BJ (cell line): ENCODE measurements at regions of chr20 and their contacts with region 1.

Region 1: GRCh38 chr20:22339091-22339881 is 245.1 kb downstream of the FOXA2 start:
- DNase-seq: no peak
- H3K4me3 ChIP-seq: no peak overlapping the region
- H3K27me3 ChIP-seq: no peaks in the 10 kb centered on the region
- CTCF ChIP-seq: peak; percentile 71

Region 2: GRCh38 chr20:22567944-22568871 is 228.9 kb after region 1 on chr20:
- CTCF ChIA-PET with region 1: no interaction called
- POLR2A ChIA-PET with region 1: no interaction called
- DNase-seq: no peak
- H3K4me3 ChIP-seq: no peak overlapping the region
- H3K27me3 ChIP-seq: peaks cover 15% of the 10 kb centered on the region
- CTCF ChIP-seq: no peak

Region 3: DNA sequence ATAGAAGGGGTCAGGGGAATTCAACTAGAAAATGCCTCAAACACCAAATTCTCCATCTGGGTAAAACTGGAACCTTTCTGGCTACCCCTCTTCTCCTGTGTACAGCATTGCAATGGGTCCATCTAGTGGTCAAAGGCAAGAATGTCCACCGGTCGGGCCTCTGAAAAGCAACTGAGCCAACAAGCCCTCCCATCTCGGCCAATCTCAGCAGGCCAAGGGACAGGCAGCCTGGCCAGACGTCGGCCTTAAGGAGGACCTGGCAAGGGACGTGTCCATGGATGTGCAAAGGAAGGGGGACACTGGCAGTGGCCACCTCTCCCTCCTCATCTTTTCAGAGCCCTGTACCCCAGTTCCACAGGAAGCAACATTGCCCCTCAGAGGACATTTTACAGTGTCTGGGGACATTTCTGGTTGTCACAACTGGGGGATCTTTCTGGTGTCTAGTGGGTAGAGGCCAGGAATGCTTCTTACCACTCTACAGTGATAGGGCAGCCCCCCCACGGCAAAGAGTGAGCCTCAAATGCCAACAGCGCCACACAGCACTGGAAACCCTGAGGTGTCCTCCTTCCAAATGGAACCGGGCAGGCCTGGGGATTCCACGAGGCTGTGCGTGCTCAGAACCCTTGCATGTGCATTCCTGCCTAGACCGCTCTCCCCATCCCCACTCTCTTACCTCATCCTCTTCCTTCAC is 344.9 kb after region 1 on chr20:
- CTCF ChIA-PET with region 1: interaction called, 86 read pairs
- POLR2A ChIA-PET with region 1: interaction called, 3 read pairs
- DNase-seq: no peak
- H3K4me3 ChIP-seq: no peak overlapping the region
- H3K27me3 ChIP-seq: no peaks in the 10 kb centered on the region
- CTCF ChIP-seq: peak; percentile 88

Region 4: DNA sequence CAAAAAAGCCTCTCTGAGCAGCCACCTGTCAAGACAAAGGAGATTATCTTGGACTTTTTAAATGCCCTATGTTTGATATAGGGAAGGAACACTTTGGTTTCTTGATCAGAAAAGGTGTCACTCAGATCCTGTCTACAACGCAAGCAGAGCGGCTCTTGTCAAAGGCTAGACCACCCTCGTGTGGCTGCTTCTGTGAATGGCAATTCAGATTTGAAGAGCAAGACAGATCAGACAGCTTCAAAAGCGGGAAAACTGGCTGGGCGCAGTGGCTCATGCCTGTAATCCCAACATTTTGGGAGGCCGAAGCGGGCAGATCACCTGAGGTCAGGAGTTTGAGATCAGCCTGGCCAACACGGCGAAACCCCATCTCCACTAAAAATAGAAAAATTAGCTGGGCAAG is 1001.2 kb after region 1 on chr20:
- CTCF ChIA-PET with region 1: interaction called, 11 read pairs
- POLR2A ChIA-PET with region 1: no interaction called
- DNase-seq: no peak
- H3K4me3 ChIP-seq: no peak overlapping the region
- H3K27me3 ChIP-seq: peaks cover 2% of the 10 kb centered on the region; the same call in 1 of the 2 replicates
- CTCF ChIP-seq: peak; percentile 57